ENCODE measurements at regions of chr5 and their contacts with region 1.

Region 1: DNA sequence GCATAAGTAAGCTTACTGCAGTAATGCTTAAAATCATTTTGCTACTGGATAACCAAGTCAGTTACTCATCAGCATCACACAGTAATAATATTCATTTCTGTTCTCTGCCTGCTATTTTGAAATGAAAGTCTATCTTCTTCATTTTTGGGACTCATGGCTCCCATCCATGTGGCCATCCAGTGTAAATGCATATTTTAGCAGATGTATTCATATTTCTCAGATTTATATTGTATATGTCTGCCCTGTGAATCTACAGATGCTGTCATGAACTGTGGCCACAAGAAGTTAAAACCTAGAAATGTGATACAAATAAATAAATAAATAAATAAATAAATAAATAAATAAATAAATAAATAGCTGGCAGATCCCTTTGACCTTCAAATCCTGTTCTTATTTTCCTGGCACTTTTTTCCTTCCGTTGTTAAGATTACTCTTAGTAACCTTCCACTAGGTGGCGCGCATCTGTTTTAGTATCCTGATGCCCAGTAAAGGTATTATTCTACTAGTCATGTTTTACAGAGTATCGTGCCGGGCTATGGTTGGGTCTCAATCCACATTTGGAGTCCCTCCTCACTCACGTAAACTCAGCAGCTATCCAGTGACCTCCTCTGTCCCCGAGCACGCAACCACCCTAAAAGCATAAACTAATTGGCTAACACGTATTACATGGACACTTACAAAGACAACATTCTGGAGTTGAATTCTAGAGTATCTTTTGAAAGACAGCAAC is 79.2 kb upstream of the IL7R start:
- DNase-seq: no peak
- ATAC-seq: peak; percentile 90
- H3K4me3 ChIP-seq: no peak overlapping the region
- H3K27ac ChIP-seq: no peak overlapping the region
- H3K4me1 ChIP-seq: no peaks in the 10 kb centered on the region
- H3K27me3 ChIP-seq: no peaks in the 10 kb centered on the region
- CTCF ChIP-seq: peak; percentile 53 to 67 (median 56); a peak in 5 of 6 replicates
- EP300 ChIP-seq: no peak
- POLR2A ChIP-seq: no peak
- RAD21 ChIP-seq: peak; percentile 88

Region 2: DNA sequence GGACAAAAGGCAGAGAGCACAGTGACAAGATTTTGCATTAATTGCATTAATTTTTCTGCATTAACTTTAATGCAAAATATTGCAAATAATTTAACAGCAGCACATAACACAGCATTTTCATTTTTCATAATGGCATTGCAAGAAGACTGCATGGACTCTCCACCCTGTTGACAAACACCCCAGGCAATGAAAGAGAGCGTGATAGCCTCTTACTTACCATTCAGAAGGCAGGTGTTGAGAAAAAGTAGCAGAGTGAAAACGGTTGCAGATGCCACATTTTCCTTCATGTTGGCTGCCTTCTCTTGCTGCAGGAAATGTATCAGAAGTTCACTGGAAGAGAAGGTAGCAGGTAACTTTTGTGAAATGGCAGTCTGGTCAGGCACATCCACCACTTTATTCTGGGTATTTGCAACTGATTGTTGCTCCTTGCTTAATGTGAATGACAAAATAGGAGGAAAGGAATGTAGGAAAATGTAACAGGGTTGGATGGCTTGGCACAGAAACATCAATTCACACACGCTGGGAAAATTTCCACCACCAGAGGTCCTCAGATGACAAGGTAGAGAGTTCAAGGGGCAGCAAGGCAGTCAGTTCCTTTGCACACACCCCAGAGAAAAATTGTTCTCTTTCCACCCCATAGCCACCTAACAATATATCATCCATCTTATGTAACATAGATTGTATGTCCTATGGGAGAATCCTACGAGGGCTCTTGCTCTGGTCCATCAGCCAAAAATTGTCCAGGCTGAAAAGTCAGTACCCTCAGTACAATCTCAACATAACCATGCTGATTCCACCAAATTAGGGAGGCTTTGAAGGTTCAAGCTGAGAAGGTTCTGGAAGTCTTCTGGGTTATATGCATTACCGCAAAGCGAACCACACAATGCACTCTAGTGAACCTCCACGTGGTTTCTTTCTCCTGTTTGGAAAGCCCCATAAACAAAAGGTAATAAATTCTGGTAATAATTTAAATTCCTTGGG is 687.9 kb before region 1 on chr5:
- CTCF ChIA-PET with region 1: interaction called, 3 read pairs
- POLR2A ChIA-PET with region 1: no interaction called
- RAD21 ChIA-PET with region 1: no interaction called
- SMC1A ChIA-PET with region 1: interaction called, 4 read pairs
- in situ Hi-C with region 1: no loop called
- intact Hi-C with region 1: loop called (anchors 5 kb)
- DNase-seq: peak; percentile 28
- ATAC-seq: peak; percentile 92
- H3K4me3 ChIP-seq: no peak overlapping the region
- H3K27ac ChIP-seq: no peak overlapping the region
- H3K4me1 ChIP-seq: no peaks in the 10 kb centered on the region
- H3K27me3 ChIP-seq: no peaks in the 10 kb centered on the region
- CTCF ChIP-seq: peak; percentile 75 to 90 (median 78); a peak in 5 of 6 replicates
- EP300 ChIP-seq: no peak
- POLR2A ChIP-seq: no peak
- RAD21 ChIP-seq: peak; percentile 94

Region 3: DNA sequence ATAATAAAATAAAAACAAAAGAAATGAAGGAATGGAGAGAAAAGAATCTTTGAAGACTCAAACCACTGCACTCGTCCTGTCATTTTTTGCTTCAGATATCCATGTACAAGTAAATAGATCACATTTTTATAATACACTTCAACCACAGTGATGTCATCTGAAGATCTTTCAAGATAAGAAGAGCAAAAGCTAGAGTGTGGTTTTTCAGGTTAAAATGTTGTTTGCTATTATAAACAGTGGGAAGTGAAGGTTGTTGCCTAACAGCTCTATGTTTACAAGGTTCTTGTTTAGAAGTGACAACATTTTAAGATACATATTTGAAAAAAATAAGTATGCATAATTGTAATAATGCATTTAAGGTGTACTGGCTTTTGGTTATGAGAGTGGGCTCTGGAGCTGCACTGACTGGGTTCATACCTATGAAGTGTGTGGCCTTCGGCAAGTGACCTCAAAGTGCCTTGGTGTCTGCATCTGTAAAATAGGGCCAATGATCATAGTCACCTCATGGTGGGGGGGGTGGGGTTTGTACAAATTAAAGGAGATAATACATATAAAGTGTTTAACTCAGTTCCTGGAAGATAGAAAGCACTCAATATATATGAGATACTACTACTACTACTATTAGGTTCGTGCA is 33.7 kb after region 1 on chr5:
- CTCF ChIA-PET with region 1: interaction called, 17 read pairs
- POLR2A ChIA-PET with region 1: no interaction called
- RAD21 ChIA-PET with region 1: interaction called, 4 read pairs
- SMC1A ChIA-PET with region 1: interaction called, 27 read pairs
- in situ Hi-C with region 1: no loop called
- intact Hi-C with region 1: no loop called
- DNase-seq: no peak
- ATAC-seq: peak; percentile 49
- H3K4me3 ChIP-seq: no peak overlapping the region
- H3K27ac ChIP-seq: no peak overlapping the region
- H3K4me1 ChIP-seq: no peaks in the 10 kb centered on the region
- H3K27me3 ChIP-seq: no peaks in the 10 kb centered on the region
- CTCF ChIP-seq: no peak
- EP300 ChIP-seq: no peak
- POLR2A ChIP-seq: no peak
- RAD21 ChIP-seq: no peak

Region 4: DNA sequence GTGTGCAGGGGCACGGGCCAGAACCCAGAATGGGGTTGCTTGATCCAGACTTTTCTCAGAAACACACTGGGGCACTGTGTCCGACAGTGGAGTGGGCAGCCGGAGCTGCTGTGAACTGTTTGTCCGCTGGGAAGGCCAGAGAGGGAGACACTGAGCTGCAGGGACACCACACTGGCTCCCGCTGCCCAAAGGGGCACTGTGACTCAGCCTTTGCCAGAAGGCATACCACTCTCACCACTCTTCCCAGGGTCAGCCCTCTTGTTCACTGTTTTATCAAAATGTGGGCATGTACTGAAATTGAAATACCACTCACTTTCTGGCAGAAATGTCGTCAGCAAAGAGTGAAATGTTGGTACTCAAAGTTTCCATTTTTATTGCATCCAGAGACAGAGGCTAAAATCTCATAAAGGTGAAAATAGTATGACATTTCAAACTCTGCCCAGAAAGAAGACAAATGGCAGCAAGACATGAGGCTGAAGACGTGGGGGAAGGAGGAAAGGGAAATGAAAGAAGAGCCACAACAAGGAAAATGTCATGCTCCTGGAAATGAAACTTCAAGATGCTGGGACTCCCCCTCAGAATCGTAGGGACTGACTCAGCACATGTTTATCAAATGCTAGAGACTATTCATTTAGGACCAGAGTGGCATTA is 74.7 kb after region 1 on chr5:
- CTCF ChIA-PET with region 1: interaction called, 10 read pairs
- POLR2A ChIA-PET with region 1: no interaction called
- RAD21 ChIA-PET with region 1: interaction called, 9 read pairs
- SMC1A ChIA-PET with region 1: interaction called, 6 read pairs
- in situ Hi-C with region 1: no loop called
- intact Hi-C with region 1: loop called (anchors 5 kb)
- DNase-seq: peak; percentile 26
- ATAC-seq: peak; percentile 65
- H3K4me3 ChIP-seq: no peak overlapping the region
- H3K27ac ChIP-seq: no peak overlapping the region
- H3K4me1 ChIP-seq: peaks cover 18% of the 10 kb centered on the region
- H3K27me3 ChIP-seq: no peaks in the 10 kb centered on the region
- CTCF ChIP-seq: peak in 2 of 3 experiments; percentile 3 to 23; a peak in 1 of 6 replicates
- EP300 ChIP-seq: peak; percentile 31 to 41; a peak in 1 of 4 replicates
- POLR2A ChIP-seq: no peak
- RAD21 ChIP-seq: no peak

Region 5: DNA sequence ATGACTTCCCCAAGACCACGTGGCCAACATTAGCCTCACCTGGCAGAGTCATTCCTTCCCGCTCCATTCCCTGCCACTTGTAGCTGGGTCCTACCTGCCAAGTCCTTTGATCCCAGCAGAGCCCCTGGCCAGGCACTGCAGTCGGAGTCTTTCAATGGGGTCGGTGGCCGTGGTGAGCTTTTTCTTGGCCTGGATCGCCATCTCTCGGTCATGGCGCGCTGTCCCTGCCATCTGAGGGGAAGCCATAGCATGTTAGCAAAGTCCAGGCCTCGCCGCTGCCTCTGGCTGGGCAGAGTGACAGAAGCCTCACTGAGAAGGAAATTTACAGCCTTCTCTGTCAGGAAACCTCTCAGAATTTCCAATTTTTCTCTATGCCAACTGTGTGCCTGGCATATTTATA is 143.4 kb after region 1 on chr5:
- CTCF ChIA-PET with region 1: interaction called, 359 read pairs
- POLR2A ChIA-PET with region 1: interaction called, 3 read pairs
- RAD21 ChIA-PET with region 1: interaction called, 128 read pairs
- SMC1A ChIA-PET with region 1: interaction called, 276 read pairs
- in situ Hi-C with region 1: loop called (anchors 5 kb)
- intact Hi-C with region 1: loop called (anchors 1 kb)
- DNase-seq: no peak
- ATAC-seq: peak; percentile 65
- H3K4me3 ChIP-seq: no peak overlapping the region
- H3K27ac ChIP-seq: no peak overlapping the region
- H3K4me1 ChIP-seq: peaks cover 4% of the 10 kb centered on the region; the same call in 1 of the 2 replicates
- H3K27me3 ChIP-seq: no peaks in the 10 kb centered on the region
- CTCF ChIP-seq: peak in 2 of 3 experiments; percentile 7 to 36; a peak in 1 of 6 replicates
- EP300 ChIP-seq: no peak
- POLR2A ChIP-seq: no peak
- RAD21 ChIP-seq: peak; percentile 46; the same call in 1 of the 2 replicates

Region 6: GRCh38 chr5:35954175-35954574 is 176.7 kb after region 1 on chr5:
- CTCF ChIA-PET with region 1: no interaction called
- POLR2A ChIA-PET with region 1: no interaction called
- RAD21 ChIA-PET with region 1: no interaction called
- SMC1A ChIA-PET with region 1: no interaction called
- in situ Hi-C with region 1: no loop called
- intact Hi-C with region 1: no loop called
- DNase-seq: no peak
- ATAC-seq: no peak
- H3K4me3 ChIP-seq: no peak overlapping the region
- H3K27ac ChIP-seq: no peak overlapping the region
- H3K4me1 ChIP-seq: no peaks in the 10 kb centered on the region
- H3K27me3 ChIP-seq: peaks cover 0 to 2% of the 10 kb centered on the region in 2 experiments; a peak in 1 of 4 replicates
- CTCF ChIP-seq: no peak
- EP300 ChIP-seq: no peak
- POLR2A ChIP-seq: no peak
- RAD21 ChIP-seq: no peak

Region 7: DNA sequence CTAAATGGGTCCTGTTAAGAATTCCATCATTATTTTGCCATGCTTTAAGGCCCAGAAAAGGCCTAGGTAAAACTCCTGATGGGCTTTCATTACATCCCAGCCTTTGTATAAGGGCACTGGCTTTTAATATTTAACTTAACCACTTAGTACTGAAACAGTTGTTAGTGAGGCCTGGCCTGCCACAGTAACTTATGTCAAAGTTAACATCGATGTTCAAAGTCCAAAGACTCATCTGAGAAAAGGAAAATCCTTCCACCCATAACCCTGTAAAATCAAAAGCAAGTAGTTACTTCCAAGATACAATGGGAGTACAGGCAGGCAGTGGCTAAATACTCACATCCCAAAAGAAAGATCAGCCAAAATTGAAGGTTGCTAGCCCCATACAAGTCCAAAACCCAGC is 228.6 kb after region 1 on chr5:
- CTCF ChIA-PET with region 1: no interaction called
- POLR2A ChIA-PET with region 1: no interaction called
- RAD21 ChIA-PET with region 1: no interaction called
- SMC1A ChIA-PET with region 1: no interaction called
- in situ Hi-C with region 1: no loop called
- intact Hi-C with region 1: no loop called
- DNase-seq: no peak
- ATAC-seq: no peak
- H3K4me3 ChIP-seq: no peak overlapping the region
- H3K27ac ChIP-seq: no peak overlapping the region
- H3K4me1 ChIP-seq: no peaks in the 10 kb centered on the region
- H3K27me3 ChIP-seq: no peaks in the 10 kb centered on the region
- CTCF ChIP-seq: no peak
- EP300 ChIP-seq: no peak
- POLR2A ChIP-seq: no peak
- RAD21 ChIP-seq: no peak

Measured in GM12878 (cell line).